Naive thymus-derived CD4-positive, alpha-beta T cell (primary cell): ENCODE measurements at regions of chr10 and their contacts with region 1.

Region 1: DNA sequence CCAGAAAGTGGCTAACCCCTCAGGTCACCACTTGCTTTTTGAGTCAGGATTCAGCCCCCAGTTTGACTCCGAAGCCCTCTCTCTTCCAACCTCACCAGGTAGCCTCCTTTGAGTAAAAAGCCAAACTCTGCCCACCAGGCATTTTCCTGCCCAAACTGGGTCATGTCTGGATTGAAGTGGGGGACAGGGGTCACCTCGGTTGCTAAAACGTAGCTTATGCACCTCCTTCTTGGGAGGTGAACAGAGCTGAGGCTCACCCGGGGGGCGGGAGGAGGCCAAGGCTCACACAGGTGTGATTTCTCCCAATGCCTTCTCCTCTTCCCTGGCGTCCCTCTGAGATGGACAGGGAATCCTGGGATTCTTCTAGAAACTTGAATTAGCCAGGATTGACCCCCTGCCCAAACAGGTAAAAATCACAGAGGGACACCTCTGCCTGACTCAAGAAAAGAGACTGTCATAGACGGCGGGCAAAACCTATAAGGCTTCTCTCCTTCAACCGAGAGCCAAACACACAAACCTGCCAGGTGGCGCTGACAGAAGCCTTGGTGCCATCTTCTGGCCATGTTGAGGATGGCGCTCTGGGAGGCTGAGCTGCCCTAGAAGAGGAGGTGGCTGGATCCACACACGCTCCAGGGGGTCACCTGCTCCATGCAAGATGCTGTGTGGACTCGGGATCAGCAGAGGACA is 51.6 kb downstream of the PRLHR start:
- DNase-seq: peak in 8 of 9 donors; percentile 13 to 43 (median 26)
- ATAC-seq: peak; percentile 67
- H3K4me3 ChIP-seq: no peak overlapping the region
- H3K4me3 Mint-ChIP-seq: peak overlapping the region in 1 of 10 donors; percentile 23
- H3K27ac ChIP-seq: no peak overlapping the region
- H3K27ac Mint-ChIP-seq: no peak overlapping the region
- H3K4me1 ChIP-seq: no peaks in the 10 kb centered on the region
- H3K4me1 Mint-ChIP-seq: peaks cover 0 to 3% (median 0%) of the 10 kb centered on the region in 7 donors
- H3K27me3 ChIP-seq: peaks cover 0 to 5% of the 10 kb centered on the region in 2 donors
- H3K27me3 Mint-ChIP-seq: peaks cover 28 to 59% (median 56%) of the 10 kb centered on the region in 5 donors

Region 2: DNA sequence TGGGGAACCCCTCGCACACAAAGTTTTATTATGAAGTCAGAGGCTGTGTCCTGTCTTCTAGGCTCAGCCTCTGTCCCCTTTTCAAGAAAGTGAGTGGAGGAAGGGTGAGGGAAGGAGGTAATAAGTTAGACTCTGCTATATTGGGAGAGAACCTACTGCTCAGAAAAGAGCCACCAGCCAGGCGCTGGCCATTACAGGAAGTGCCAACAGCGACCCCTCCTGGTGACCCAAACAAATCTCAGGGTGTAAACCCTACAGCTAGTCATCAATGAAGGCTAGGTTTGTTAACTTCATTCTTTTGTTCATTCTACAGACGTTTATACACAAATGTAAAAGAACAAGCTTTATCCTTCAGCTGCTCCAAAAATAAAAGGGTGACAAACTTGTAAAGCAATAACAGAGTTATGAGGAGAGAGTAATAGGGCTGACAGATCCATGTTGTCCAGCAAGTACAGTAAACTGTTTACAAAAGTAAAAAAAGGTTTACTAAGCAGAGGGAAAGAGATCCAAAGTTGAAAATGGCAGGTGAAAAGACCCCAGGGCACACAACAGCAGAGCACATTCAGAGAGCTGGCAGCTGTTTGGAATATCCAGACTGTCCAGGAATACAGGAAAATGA is 284.5 kb before region 1 on chr10:
- CTCF ChIA-PET with region 1: no interaction called
- POLR2A ChIA-PET with region 1: no interaction called
- intact Hi-C with region 1: loop called in 1 of 2 experiments (anchors 5 kb)
- DNase-seq: peak in 3 of 9 donors; percentile 1 to 23 (median 2)
- ATAC-seq: peak; percentile 31
- H3K4me3 ChIP-seq: no peak overlapping the region
- H3K4me3 Mint-ChIP-seq: no peak overlapping the region
- H3K27ac ChIP-seq: no peak overlapping the region
- H3K27ac Mint-ChIP-seq: no peak overlapping the region
- H3K4me1 ChIP-seq: no peaks in the 10 kb centered on the region
- H3K4me1 Mint-ChIP-seq: peaks cover 0 to 1% (median 0%) of the 10 kb centered on the region in 7 donors
- H3K27me3 ChIP-seq: peaks cover 0 to 3% of the 10 kb centered on the region in 2 donors
- H3K27me3 Mint-ChIP-seq: peaks cover 63 to 77% (median 68%) of the 10 kb centered on the region in 5 donors

Region 3: DNA sequence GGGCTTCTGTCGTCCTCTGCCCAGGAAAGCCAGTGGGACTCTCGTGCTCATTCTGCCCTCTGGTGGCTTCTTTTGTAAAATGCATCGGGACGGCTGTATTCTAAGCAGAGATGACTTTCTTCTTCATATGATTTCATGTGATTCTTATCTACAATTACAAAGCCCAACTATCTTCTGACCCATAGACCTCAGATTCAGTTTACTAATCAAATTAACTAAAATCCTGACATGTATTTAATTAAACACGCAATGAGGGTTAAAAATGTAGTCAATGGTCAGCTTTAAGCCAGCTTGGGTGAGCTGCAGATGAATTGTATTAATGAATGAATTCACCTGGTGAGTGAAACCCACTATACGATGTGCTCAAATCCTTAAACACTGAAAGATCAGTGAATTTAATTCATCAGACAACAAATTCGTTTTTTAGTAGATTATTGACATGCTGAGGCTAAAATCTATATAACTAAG is 84.1 kb before region 1 on chr10:
- CTCF ChIA-PET with region 1: no interaction called
- POLR2A ChIA-PET with region 1: no interaction called
- intact Hi-C with region 1: loop called in 1 of 2 experiments (anchors 2 kb)
- DNase-seq: peak in 7 of 9 donors; percentile 14 to 46 (median 37)
- ATAC-seq: peak; percentile 65
- H3K4me3 ChIP-seq: peak overlapping the region; percentile 45
- H3K4me3 Mint-ChIP-seq: peak overlapping the region; percentile 46 to 78 (median 62)
- H3K27ac ChIP-seq: no peak overlapping the region
- H3K27ac Mint-ChIP-seq: no peak overlapping the region
- H3K4me1 ChIP-seq: no peaks in the 10 kb centered on the region
- H3K4me1 Mint-ChIP-seq: peaks cover 0 to 9% (median 8%) of the 10 kb centered on the region in 7 donors
- H3K27me3 ChIP-seq: no peaks in the 10 kb centered on the region
- H3K27me3 Mint-ChIP-seq: peaks cover 37 to 65% (median 42%) of the 10 kb centered on the region in 5 donors